ENCODE measurements at regions of chr14 and their contacts with region 1.

Region 1: DNA sequence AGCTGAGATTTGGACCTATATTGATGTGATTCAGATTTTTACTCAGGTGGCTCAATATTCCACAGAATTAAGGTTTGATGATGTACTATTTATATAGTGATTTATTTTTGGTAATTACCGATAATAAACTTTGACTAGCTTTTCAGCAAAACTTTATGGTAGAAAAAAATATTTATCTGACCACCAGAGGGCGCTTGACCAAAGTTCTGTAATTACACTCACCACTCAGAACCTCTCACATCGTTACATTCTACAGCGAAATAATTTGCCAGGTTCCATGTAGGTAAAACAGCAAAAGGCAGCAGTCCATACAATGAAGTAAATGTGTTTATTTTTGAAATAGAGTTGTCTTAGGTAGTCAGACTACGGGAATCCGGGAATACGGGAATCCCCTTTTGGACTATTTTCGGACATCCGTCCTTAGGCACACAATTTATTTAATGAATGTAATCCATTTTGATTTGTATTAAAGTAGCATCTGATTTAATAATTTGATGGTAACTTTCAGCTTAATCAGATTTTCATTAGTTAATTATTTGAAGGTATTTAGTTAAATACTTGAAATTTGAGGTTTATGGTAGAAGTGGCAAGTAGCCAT is 143.0 kb upstream of the DDHD1 start:
- DNase-seq: peak; percentile 9 to 39
- ATAC-seq: peak in 1 of 2 experiments; percentile 50; a peak in 1 of 6 replicates
- H3K4me3 ChIP-seq: no peak overlapping the region
- H3K27ac ChIP-seq: no peak overlapping the region
- H3K4me1 ChIP-seq: no peaks in the 10 kb centered on the region
- CTCF ChIP-seq: peak; percentile 85
- EP300 ChIP-seq: no peak
- POLR2A ChIP-seq: no peak
- RAD21 ChIP-seq: peak; percentile 30 to 44; a peak in 4 of 5 replicates

Region 2: GRCh38 chr14:53278930-53279506 is 17.1 kb before region 1 on chr14:
- CTCF ChIA-PET with region 1: interaction called, 22 read pairs
- POLR2A ChIA-PET with region 1: no interaction called
- DNase-seq: peak in 1 of 2 experiments; percentile 78
- ATAC-seq: peak; percentile 62 to 82; a peak in 4 of 6 replicates
- H3K4me3 ChIP-seq: no peak overlapping the region
- H3K27ac ChIP-seq: peak overlapping the region; percentile 48 to 80
- H3K4me1 ChIP-seq: peaks cover 12% of the 10 kb centered on the region
- CTCF ChIP-seq: no peak
- EP300 ChIP-seq: no peak
- POLR2A ChIP-seq: no peak
- RAD21 ChIP-seq: no peak

Measured in A549 (cell line).